ENCODE measurements at regions of chr2 and their contacts with region 1.

Region 1: DNA sequence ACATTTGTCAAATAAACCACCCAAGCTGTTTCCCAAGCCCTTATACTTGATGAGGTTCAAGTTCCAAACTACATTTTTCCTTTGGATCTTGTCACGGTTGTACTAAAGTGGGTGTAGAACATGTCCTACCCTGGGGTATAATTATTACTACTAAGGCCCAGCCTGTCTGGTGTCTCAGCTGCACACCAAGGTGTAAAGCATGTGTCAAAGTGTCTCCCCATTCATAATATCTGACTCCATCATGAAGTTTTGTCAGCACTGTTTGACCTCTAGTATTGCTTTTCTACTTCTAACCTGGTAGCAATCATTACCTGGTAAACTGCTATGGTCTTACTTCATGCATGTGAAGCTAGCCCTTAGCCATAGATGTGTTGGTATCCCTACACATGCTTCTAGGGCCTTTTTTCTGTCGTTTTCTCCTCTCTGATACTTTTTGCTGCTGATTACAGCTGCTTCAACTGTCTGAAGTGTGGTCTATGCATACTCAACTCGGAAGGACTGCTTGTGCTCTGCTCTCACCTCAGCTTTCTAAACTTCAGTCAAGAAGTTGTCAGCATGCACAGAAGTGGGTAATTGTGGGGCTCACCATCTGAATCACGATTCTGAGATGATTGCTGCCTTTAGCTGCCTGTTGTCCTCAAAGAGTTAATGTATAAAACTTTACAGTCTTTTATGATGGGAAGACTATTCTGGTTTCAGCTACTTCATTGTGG is 445.7 kb upstream of the TRIB2 start:
- DNase-seq: peak; percentile 63
- H3K4me3 Mint-ChIP-seq: no peak overlapping the region
- H3K27ac Mint-ChIP-seq: no peak overlapping the region
- H3K4me1 Mint-ChIP-seq: peaks cover 12% of the 10 kb centered on the region
- H3K27me3 Mint-ChIP-seq: no peaks in the 10 kb centered on the region

Region 2: GRCh38 chr2:12176623-12177454 is 94.2 kb before region 1 on chr2:
- CTCF ChIA-PET with region 1: no interaction called
- POLR2A ChIA-PET with region 1: no interaction called
- intact Hi-C with region 1: loop called (anchors 5 kb)
- DNase-seq: peak; percentile 48
- H3K4me3 Mint-ChIP-seq: no peak overlapping the region
- H3K27ac Mint-ChIP-seq: no peak overlapping the region
- H3K4me1 Mint-ChIP-seq: peaks cover 36% of the 10 kb centered on the region
- H3K27me3 Mint-ChIP-seq: no peaks in the 10 kb centered on the region

Measured in activated CD4-positive, alpha-beta memory T cell treated with anti-CD3 and anti-CD28 coated beads for 36 hours (primary cell).